Lower lobe of right lung (tissue), 2 donors: ENCODE measurements at regions of chr10 and their contacts with region 1.

Region 1: DNA sequence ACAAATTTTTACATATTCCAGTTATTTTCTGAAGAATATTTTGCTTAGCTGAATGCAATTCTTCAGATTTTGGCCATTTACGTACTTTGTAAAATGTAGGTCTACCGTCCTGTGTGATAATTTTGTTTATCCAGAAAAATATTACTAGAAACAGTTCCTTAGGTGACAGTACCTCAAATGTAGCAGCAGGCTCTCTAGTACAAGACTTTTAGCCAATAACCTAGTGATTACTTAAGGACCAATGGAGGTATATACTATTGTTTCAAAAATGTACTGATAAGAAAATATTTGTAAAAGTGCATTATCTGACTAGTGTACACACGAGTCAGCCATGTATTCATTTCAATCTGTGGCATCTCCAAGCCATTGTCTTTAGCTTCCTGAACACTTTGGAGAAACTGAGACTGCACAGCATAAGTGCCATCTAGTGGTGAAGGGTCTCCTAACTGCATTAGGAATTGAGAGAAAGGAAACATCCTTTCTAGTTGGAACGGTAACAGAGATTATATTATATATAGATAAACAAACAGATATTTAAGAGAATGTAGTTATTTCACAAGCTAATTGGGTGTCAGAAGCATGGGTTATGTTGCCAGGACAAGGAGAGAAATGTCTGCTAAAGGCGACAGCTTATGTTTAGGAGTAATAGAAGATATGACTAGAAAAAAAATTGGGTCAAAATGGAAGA is 23.7 kb downstream of the RTKN2 start:
- DNase-seq: no peak
- ATAC-seq: peak; percentile 74 to 84
- H3K4me3 ChIP-seq: no peak overlapping the region
- H3K27ac ChIP-seq: no peak overlapping the region
- H3K4me1 ChIP-seq: peaks cover 18% of the 10 kb centered on the region
- H3K27me3 ChIP-seq: no peaks in the 10 kb centered on the region
- CTCF ChIP-seq: peak; percentile 84

Region 2: DNA sequence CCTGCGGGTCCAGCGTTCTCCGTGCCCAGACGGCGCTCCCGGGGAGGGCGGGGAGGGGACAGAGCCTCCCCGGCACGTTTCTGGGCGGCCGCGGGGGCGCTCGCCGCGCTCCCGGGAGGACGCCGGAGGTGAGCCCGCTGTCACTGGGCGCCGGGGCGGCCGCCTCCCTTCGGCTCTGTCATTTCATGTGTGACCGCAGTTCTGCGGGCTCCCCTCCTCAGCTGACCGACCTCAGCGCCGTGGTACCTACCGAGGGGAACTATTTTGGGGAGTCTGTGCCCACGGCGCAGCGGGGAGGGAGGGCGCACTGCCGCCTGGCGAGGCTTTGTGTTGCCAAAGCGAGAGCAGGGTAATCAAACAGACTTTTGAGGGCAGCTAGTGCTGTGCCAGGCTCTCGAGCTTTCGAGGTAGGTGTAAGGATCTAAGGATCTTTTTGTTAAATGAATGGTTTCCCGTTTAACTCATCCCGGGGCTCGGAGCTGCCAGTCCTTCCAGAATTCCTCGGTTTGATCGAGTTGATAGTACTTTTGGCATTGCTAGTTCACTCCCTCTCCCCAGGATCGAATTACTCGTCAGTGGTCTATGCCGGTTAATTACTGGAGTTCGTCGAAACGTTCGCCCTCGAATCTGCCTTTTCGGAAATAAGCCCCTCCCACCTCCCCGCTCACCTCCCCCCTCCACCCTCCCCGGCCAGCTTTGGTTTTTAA is 341.6 kb before region 1 on chr10:
- intact Hi-C with region 1: loop called (anchors 10 kb)
- DNase-seq: peak; percentile 77
- ATAC-seq: peak; percentile 77 to 80
- H3K4me3 ChIP-seq: peak overlapping the region; percentile 75
- H3K27ac ChIP-seq: peak overlapping the region; percentile 96
- H3K4me1 ChIP-seq: peaks cover 38% of the 10 kb centered on the region
- H3K27me3 ChIP-seq: no peaks in the 10 kb centered on the region
- CTCF ChIP-seq: peak; percentile 41

Region 3: GRCh38 chr10:61943674-61944410 is 301.1 kb before region 1 on chr10:
- intact Hi-C with region 1: loop called (anchors 5 kb)
- DNase-seq: no peak
- ATAC-seq: peak; percentile 31 to 60
- H3K4me3 ChIP-seq: peak overlapping the region; percentile 19
- H3K27ac ChIP-seq: peak overlapping the region; percentile 76
- H3K4me1 ChIP-seq: peaks cover 56% of the 10 kb centered on the region
- H3K27me3 ChIP-seq: no peaks in the 10 kb centered on the region
- CTCF ChIP-seq: peak; percentile 30